ENCODE measurements at regions of chr2 and their contacts with region 1.

Region 1: DNA sequence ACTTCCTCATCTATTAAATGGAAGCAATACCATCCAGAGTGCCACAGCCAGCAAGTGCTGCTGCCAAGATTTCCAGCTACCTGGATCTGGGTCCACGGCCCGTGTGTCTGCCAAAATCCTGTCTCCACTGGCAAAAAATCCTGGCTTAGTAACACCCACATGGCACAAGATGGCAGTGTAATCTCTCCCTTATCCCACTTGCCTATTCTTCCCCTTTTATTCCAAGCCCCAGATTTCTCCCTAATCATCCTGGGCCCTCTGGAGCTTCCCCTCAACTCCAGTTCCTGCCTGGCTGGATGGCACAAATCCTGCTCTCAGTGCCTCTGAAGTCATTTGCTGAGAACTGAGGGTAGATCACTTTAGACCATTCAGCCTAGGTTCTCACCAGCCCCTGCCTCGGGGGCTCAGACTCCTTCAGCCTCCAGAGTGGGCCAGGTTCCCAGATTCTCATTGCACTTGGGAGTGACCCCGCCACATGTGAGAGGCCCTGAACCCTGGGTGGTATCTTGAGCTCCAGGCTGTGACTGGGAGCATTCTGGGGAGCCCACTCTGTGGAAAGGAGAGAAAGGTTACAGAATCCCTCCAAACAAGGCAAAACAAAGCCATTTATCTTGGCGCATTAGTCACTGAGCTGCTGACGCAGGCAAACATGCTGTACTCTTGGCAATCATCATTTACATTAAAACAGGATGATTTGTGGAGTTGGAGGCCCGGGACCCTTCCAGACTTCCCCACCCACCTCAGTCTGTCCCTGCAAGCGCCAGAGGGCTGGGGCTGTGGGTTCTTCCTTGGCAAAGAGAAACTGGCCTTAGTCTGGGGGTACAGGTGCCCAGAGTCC is 325.8 kb downstream of the DYSF start:
- DNase-seq: no peak
- ATAC-seq: no peak

Region 2: DNA sequence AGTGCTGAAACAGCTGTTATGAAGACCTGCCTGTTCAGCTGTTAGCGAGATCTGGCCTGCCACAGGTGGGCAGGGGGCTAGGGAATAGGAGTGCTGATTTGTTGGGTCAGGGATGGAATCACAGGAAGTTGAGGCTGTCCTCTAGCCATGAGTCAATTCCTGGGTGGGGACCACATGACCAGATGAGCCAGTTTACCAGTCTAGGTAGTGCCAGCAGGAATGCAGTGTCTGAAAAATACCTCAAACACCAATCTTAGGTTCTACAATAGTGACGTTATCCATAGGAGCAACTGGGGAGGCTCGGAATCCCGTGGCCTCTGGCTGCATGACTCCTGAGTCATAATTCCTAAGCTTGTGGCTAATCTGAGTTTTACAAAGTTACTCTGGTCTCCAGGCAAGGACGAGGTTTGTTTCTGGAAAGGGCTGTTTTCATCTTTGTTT is 280.9 kb before region 1 on chr2:
- intact Hi-C with region 1: no loop called
- DNase-seq: no peak
- ATAC-seq: no peak

Region 3: GRCh38 chr2:71609958-71610357 is 169.2 kb before region 1 on chr2:
- intact Hi-C with region 1: loop called in 1 of 2 experiments (anchors 10 kb)
- DNase-seq: no peak
- ATAC-seq: no peak